Astrocyte of the cerebellum (primary cell): ENCODE measurements at regions of chr9 and their contacts with region 1.

Region 1: DNA sequence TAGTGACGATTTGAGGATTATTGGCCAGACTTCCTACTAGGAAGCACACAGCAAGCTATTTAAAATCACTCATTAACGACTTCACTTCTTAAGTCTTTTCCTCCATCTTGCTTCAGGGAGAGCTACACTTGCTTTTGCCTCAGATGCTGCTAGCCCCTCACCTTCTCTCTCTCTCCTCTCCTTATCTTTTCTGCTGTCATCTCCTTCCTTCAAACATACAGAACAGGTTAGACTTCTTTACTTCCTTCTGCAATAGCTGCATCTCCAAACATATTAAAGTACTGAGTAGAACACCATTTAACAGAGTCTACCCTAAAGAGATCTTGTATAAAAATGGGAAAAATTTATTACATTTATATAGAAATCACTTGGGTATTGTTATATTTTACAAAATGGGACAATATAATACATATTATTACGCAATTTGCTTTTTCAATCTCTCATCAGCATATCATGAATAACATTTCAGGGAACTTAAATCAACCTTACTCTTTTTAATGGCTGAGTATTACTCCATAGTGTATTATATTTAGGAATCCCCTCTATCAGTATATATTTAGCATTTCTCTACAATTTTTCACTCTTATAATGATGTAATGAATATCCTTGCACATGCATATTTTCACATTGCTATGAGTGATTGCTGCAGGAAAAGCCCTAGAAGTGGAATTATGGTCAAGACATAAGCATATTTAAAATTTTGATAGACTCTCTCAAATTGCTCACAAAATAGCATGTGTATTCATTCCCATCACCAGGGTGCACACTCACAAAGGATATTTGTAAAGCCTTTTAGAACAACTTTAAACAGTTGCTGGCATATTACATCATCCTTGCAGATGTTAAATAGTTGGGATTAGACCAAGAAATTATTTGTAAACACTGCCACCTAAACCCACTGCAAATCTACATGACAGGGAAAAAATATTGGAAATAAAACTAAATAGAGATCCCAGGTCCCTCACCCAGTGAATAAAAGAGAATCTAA is 164.5 kb upstream of the NFIB start:
- DNase-seq: no peak
- H3K4me3 ChIP-seq: no peak overlapping the region
- CTCF ChIP-seq: no peak

Region 2: GRCh38 chr9:14532716-14533115 is 54.2 kb after region 1 on chr9:
- in situ Hi-C with region 1: loop called (anchors 5 kb)
- DNase-seq: no peak
- H3K4me3 ChIP-seq: no peak overlapping the region
- CTCF ChIP-seq: no peak

Region 3: DNA sequence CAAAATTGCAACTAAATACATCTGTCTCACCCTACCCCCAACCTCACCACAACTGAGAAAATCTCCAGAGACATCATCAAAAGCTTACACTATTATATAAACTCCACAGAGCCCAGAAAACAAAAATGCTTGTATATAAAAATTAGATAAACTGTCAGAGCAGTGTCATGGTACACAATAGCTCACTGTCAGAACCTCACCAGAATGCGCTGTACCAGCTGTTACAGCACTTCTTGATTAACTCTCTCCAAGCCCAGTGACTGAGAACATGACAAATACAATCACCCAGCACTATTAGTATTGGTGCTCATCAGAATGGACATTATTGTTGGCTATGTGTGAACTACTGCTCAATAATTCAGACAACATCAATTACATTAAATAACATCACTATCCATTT is 149.0 kb after region 1 on chr9:
- in situ Hi-C with region 1: loop called (anchors 25 kb)
- DNase-seq: no peak
- H3K4me3 ChIP-seq: no peak overlapping the region
- CTCF ChIP-seq: no peak